Heart left ventricle (tissue), 16 donors: ENCODE measurements at regions of chr4 and their contacts with region 1.

Region 1: GRCh38 chr4:46931981-46932380 is 22.9 kb upstream of the COX7B2 start:
- DNase-seq: peak in 1 of 5 donors; percentile 20
- ATAC-seq: peak in 3 of 4 donors; percentile 75 to 83 (median 79)
- H3K4me3 ChIP-seq: no peak overlapping the region
- H3K27ac ChIP-seq: peak overlapping the region in 1 of 12 donors; percentile 1
- H3K4me1 ChIP-seq: peaks cover 0 to 17% (median 0%) of the 10 kb centered on the region in 12 donors
- H3K27me3 ChIP-seq: peaks cover 0 to 3% (median 0%) of the 10 kb centered on the region in 9 donors
- CTCF ChIP-seq: peak; percentile 33 to 68 (median 53)
- POLR2A ChIP-seq: no peak

Region 2: DNA sequence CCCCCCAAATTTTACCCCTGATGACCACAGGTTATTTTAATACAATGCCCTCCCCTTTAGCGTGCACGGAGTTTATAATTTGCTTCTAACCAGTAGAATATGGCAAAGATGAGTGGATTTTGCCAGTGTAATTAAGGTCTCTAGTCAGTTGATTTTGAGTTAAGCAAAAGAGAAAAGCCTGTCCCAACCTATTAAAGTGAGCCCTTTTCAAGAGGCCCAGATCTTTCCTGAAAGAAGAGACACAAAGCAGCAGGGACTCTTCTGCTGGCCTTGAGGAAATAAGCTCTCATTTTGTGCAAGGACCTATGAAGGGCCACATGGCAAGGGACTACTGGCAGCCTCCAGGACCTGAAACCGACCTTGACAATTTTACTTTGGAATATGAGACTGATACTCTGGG is 746.2 kb before region 1 on chr4:
- intact Hi-C with region 1: no loop called
- DNase-seq: no peak
- ATAC-seq: no peak
- H3K4me3 ChIP-seq: no peak overlapping the region
- H3K27ac ChIP-seq: no peak overlapping the region
- H3K4me1 ChIP-seq: no peaks in the 10 kb centered on the region
- H3K27me3 ChIP-seq: no peaks in the 10 kb centered on the region
- CTCF ChIP-seq: no peak
- POLR2A ChIP-seq: no peak

Region 3: GRCh38 chr4:46648088-46648744 is 283.8 kb before region 1 on chr4:
- intact Hi-C with region 1: no loop called
- DNase-seq: no peak
- ATAC-seq: no peak
- H3K4me3 ChIP-seq: no peak overlapping the region
- H3K27ac ChIP-seq: no peak overlapping the region
- H3K4me1 ChIP-seq: no peaks in the 10 kb centered on the region
- H3K27me3 ChIP-seq: no peaks in the 10 kb centered on the region
- CTCF ChIP-seq: no peak
- POLR2A ChIP-seq: no peak

Region 4: DNA sequence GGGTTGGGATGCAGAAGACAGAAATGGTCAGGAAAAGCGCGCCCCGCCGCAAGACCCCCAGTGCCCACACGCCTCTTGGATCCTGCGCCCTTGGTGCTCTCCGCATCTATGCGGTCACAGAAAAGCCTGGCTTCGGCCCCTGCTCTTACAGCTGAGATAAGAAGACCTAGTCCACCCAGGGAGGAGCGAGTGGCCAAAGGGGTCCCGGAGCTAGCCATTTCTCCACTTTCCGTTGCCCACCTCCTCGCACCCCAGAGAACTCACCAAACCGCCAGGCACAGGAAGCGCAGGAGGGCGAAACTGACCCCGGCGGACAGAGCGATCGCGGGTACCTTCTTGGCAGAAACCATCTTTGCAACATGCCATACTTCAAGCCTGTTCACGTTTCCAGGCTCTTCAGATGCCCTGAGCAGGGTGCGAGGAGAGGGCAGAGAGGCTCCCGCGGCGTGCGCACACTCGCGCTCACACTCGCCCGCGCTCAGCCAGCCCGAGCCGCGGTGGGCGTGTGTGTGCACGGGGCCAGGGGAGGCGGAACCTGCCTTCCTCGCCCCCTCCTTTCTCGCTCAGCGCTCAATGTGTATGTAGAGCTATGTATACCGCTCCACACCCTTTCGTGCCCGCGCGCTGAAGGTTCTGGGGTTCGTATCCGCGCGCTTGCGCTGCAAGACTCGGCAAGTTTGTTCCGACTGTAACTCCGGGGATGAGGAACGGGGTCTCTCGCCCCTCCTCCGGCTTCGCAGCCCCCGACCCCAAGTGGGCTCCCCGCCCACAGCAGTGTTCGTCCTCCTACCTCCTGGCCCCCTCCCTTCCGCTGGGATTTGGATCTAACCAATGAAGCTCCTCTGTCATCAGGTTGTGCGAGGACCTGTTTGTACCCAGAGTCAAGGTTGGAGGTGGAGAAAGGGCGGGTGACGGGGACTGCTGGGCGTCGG is 61.4 kb after region 1 on chr4 and contains the start of gene GABRA4:
- intact Hi-C with region 1: loop called in 1 of 10 experiments (anchors 5 kb)
- DNase-seq: peak; percentile 23 to 56 (median 31)
- ATAC-seq: peak; percentile 49 to 88 (median 78)
- H3K4me3 ChIP-seq: peak within 1 kb of the TSS; percentile 37 to 66 (median 57)
- H3K27ac ChIP-seq: peak within 1 kb of the TSS; percentile 16 to 88 (median 80)
- H3K4me1 ChIP-seq: peaks cover 0 to 12% (median 0%) of the 10 kb centered on the region in 12 donors
- H3K27me3 ChIP-seq: peaks cover 0 to 35% (median 0%) of the 10 kb centered on the region in 9 donors
- CTCF ChIP-seq: no peak
- POLR2A ChIP-seq: no peak
- total RNA-seq, gene GABRA4: 9.3 to 43.7 (median 30.5) TPM

Region 5: DNA sequence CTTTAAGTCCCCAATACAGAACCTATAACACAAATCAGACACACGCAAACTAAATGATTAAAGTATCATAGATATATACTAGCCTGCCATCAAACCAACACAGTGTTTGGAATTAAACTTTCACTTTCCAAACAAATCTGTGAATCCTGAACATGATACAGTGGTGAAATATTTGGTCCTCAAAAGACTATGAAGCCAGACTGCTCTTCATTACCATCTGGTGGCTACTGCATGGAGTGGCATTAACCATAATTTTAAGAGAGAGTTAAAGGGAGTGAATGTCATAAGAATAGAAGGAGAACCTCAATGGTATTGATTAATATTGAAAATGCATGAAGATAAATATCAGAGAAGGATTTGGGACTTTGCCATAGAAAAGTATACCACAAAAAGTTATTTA is 70.6 kb after region 1 on chr4:
- intact Hi-C with region 1: loop called in 4 of 10 experiments (anchors 1 to 10 kb)
- DNase-seq: no peak
- ATAC-seq: peak in 2 of 4 donors; percentile 71 to 72
- H3K4me3 ChIP-seq: no peak overlapping the region
- H3K27ac ChIP-seq: no peak overlapping the region
- H3K4me1 ChIP-seq: peaks cover 0 to 12% (median 0%) of the 10 kb centered on the region in 12 donors
- H3K27me3 ChIP-seq: no peaks in the 10 kb centered on the region
- CTCF ChIP-seq: peak in 9 of 12 donors; percentile 10 to 58 (median 44)
- POLR2A ChIP-seq: no peak

Region 6: GRCh38 chr4:47017494-47017893 is 85.5 kb after region 1 on chr4:
- intact Hi-C with region 1: loop called in 1 of 10 experiments (anchors 5 kb)
- DNase-seq: no peak
- ATAC-seq: no peak
- H3K4me3 ChIP-seq: no peak overlapping the region
- H3K27ac ChIP-seq: no peak overlapping the region
- H3K4me1 ChIP-seq: no peaks in the 10 kb centered on the region
- H3K27me3 ChIP-seq: no peaks in the 10 kb centered on the region
- CTCF ChIP-seq: no peak
- POLR2A ChIP-seq: no peak

Region 7: GRCh38 chr4:47032415-47033106 is 100.6 kb after region 1 on chr4:
- intact Hi-C with region 1: loop called in 8 of 10 experiments (anchors 1 to 10 kb)
- DNase-seq: peak; percentile 52 to 81 (median 77)
- ATAC-seq: peak; percentile 89 to 95 (median 94)
- H3K4me3 ChIP-seq: peak overlapping the region; percentile 11 to 64 (median 56)
- H3K27ac ChIP-seq: peak overlapping the region in 9 of 12 donors; percentile 39 to 81 (median 74)
- H3K4me1 ChIP-seq: peaks cover 0 to 16% (median 0%) of the 10 kb centered on the region in 12 donors
- H3K27me3 ChIP-seq: peaks cover 0 to 56% (median 5%) of the 10 kb centered on the region in 9 donors
- CTCF ChIP-seq: peak; percentile 43 to 78 (median 59)
- POLR2A ChIP-seq: no peak

Region 8: DNA sequence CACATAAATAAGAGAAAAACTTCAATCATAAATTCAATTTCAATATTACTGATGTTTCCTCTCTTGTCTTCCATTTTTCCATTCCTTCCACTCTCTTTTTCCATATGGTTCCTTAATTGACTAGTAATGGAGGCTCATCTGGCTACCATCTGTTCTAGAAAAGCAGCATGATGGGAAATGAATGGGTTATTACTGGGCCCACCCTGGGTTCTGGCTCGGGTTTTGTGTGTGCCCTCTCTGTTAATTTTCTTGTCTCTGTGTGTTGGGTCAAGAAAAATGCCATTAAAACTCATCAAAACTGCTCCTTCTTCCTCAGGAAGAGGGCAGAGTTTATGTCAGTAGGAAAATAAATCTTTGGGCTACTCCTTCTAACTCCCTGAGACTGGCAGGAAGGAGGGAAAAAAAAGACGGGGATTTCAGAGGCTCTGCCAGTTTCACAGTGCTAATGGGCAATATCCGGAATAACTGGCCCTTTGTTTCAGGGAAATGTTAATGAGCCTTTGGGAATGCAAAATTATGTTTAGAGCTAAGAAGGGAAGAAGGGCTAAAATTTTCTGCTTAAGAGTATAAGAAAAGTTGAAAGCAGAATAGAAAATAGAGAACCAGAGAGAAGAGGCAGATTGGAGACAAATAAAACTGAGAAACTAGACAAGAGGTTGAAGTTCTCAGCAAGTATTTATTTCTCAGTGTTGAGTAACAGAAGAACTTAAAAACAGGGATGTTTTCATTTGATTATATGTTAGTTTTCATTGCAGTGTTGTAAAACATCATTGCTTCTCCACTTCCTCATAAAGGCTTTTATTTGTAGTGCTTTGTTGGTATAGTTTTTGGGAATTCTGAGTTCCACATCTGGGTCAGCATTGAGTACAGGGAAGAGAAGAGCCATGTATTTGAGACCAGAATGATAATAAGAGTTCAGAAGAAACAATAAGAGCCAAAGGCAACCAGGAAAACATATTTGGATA is 119.1 kb after region 1 on chr4:
- intact Hi-C with region 1: no loop called
- DNase-seq: no peak
- ATAC-seq: no peak
- H3K4me3 ChIP-seq: no peak overlapping the region
- H3K27ac ChIP-seq: no peak overlapping the region
- H3K4me1 ChIP-seq: peaks cover 0 to 5% (median 0%) of the 10 kb centered on the region in 12 donors
- H3K27me3 ChIP-seq: no peaks in the 10 kb centered on the region
- CTCF ChIP-seq: no peak
- POLR2A ChIP-seq: no peak

Region 9: DNA sequence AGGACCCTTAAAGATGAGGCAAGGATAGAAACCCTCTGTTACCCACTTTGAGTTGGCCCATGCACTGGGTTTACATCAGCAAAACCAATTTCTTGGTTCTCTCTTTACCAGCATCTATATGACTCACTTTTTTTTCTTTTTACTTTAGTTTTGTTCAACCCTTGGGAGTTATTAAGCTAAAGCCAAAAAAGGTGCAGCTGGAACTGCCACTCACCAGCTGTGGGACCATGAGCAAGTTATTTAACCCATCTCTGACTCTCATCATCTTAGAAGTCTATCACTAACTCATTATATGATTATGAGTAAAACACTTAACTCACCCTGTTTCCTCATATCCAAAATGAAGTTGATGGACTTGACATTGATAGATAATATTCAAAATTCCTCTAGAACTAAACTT is 152.8 kb after region 1 on chr4:
- intact Hi-C with region 1: no loop called
- DNase-seq: no peak
- ATAC-seq: no peak
- H3K4me3 ChIP-seq: no peak overlapping the region
- H3K27ac ChIP-seq: no peak overlapping the region
- H3K4me1 ChIP-seq: peaks cover 0 to 5% (median 0%) of the 10 kb centered on the region in 12 donors
- H3K27me3 ChIP-seq: no peaks in the 10 kb centered on the region
- CTCF ChIP-seq: no peak
- POLR2A ChIP-seq: no peak

Region 10: DNA sequence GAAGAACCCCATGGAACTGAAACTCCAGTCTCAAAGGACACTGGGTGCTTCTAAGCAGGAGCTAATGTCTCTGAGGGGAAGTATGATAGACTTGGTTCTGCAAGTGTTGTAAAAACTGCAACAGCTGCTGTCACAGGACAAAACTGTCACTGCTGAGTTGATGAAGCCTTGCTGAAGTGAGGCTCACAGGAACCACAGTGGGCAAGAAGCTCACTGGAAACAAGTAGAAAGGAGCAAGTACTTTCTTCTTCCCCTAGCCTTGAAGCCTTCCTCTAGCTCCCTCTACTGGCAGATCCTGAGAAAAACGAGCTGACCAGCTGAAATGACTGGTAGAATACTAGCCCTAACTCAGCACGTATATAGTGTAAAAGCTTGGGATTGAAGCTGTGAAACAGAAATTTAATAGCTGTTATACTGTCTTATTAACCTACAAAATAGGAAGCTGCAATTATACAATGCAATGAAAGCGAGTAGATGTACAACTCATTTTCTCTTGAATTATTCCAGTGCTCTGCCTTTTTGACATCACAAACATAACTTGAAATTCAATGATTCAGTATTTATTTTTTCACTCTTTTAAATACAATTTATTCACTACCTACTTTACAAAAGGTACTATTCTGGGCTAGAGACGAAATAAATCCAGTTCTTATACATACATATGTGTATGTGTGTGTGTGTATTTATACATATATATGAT is 190.8 kb after region 1 on chr4:
- intact Hi-C with region 1: loop called in 2 of 10 experiments (anchors 10 kb)
- DNase-seq: peak in 4 of 5 donors; percentile 24 to 44 (median 24)
- ATAC-seq: peak; percentile 52 to 76 (median 64)
- H3K4me3 ChIP-seq: no peak overlapping the region
- H3K27ac ChIP-seq: no peak overlapping the region
- H3K4me1 ChIP-seq: peaks cover 0 to 3% (median 0%) of the 10 kb centered on the region in 12 donors
- H3K27me3 ChIP-seq: no peaks in the 10 kb centered on the region
- CTCF ChIP-seq: peak; percentile 58 to 89 (median 73)
- POLR2A ChIP-seq: no peak

Region 11: DNA sequence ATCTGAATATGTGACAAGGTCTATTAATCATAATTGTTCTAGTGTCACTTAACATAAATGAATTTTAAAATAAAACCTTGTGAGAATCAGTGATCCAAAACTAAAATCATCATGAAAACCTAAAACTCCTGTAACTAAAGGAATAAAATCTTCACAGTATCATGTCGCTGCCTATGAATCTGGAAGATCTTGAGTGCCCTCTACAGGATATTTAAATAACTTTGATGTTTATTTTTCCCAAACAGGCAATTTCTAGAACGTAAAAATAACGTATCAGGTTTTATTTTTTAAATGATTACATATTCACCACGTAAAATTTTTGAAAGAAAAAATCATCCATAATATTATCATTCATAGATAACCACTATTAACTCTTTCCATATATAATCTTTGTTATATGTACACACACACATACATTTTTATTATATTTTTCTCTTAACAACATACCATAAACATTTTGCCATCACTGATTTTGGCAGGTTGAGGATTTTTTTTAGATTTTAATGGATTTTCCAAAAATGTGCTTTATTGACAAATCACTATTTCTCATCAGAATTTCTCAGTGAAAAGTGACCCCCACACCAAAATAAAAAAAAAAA is 451.9 kb after region 1 on chr4:
- intact Hi-C with region 1: loop called in 1 of 10 experiments (anchors 5 kb)
- DNase-seq: no peak
- ATAC-seq: no peak
- H3K4me3 ChIP-seq: no peak overlapping the region
- H3K27ac ChIP-seq: no peak overlapping the region
- H3K4me1 ChIP-seq: no peaks in the 10 kb centered on the region
- H3K27me3 ChIP-seq: no peaks in the 10 kb centered on the region
- CTCF ChIP-seq: peak in 11 of 12 donors; percentile 26 to 73 (median 53)
- POLR2A ChIP-seq: no peak